ENCODE measurements at regions of chr4 and their contacts with region 1.

Region 1: DNA sequence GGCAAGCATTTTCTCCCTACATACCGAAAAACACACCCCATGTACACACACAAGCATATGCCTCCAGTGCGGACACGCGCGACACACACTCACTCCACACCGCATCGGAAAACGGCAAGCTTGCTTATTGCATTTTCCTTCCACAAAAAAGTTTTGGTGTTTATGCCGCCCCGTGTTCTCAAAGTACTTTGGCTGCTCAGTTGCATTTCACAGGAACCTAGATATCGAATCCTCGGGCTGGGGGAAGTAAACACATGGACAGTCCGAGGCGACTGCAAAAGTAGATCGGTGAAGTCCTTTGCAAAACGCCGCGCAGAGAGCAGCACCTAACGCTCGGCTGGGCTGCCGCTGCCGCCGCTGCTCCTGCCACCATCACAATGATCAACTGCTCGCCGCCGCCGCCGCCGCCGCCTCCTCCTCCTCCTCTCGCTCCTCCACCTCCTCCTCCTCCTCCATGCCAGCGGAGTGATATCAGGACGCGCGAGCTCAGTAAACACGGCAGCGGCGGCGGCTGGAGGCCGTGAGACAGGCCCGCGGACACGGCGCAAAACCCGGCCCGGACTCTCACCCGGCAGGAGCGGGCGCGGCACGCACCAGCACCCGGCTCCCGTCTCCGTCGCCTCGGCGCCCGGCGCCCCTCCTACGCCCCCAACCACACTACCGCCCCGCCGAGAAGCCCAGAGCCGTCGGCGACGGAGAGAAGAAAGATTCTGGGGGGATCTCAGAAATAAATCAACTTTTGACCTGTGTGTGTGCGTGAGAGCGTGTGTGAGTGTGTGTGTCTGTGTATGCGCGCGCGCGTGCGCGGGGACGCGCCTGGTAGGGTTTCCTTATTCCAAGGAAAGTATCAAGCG is at the start of gene MAML3:
- DNase-seq: peak; percentile 91 to 93
- ATAC-seq: peak; percentile 69 to 74
- H3K4me3 ChIP-seq: peak within 1 kb of the TSS; percentile 68 to 92 (median 88)
- H3K27ac ChIP-seq: peak within 1 kb of the TSS; percentile 93 to 97 (median 94)
- H3K4me1 ChIP-seq: peaks cover 0 to 11% of the 10 kb centered on the region in 2 donors
- H3K27me3 ChIP-seq: no peaks in the 10 kb centered on the region
- CTCF ChIP-seq: peak in 4 of 5 experiments; percentile 4 to 40 (median 21)
- POLR2A ChIP-seq: peak; percentile 55 to 84
- total RNA-seq, gene MAML3: 0.98 to 1.5 (median 1.4) TPM

Region 2: DNA sequence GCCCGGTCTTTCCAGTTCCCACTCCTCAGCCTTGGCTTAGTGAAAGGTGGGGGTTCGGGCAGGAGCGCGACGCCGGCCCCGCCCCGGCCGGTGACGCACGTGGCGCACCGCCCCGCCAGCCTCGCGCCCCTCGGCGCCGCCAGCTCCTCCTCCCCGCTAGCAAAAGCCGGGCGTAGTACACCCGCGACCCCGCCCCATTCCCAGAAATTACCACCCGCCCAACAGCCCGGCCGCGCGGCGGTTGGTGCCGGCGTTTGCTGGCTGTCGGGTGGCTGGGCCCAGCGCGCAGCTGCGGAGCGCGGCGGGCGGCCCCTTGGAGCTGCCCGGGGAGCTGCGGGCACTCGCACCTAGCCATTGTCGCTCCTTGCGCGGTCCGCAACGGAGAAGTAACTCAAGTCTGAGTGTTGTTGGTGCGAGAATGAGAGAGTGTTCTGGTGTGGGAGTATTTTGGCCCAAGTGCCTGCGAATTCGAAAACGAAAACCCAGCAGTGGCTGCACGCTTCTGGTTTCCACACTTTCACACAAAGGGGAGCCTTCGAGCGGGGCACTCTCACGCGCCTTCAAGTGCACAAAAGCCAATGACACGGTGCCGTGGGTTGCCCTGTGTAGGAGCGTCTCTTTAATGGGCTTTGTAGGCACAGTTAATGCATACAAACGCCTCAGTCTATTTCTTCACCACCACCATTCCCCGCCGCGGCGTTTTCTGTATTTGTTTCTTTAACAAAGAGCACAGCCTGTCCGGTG is 975.9 kb before region 1 on chr4:
- in situ Hi-C with region 1: no loop called
- intact Hi-C with region 1: loop called (anchors 5 kb)
- DNase-seq: peak; percentile 93 to 95
- ATAC-seq: peak; percentile 70 to 71
- H3K4me3 ChIP-seq: peak overlapping the region; percentile 81 to 96 (median 88)
- H3K27ac ChIP-seq: peak overlapping the region; percentile 98 to 100 (median 100)
- H3K4me1 ChIP-seq: peaks cover 13 to 28% of the 10 kb centered on the region in 2 donors
- H3K27me3 ChIP-seq: no peaks in the 10 kb centered on the region
- CTCF ChIP-seq: no peak
- POLR2A ChIP-seq: peak; percentile 89 to 93

Region 3: DNA sequence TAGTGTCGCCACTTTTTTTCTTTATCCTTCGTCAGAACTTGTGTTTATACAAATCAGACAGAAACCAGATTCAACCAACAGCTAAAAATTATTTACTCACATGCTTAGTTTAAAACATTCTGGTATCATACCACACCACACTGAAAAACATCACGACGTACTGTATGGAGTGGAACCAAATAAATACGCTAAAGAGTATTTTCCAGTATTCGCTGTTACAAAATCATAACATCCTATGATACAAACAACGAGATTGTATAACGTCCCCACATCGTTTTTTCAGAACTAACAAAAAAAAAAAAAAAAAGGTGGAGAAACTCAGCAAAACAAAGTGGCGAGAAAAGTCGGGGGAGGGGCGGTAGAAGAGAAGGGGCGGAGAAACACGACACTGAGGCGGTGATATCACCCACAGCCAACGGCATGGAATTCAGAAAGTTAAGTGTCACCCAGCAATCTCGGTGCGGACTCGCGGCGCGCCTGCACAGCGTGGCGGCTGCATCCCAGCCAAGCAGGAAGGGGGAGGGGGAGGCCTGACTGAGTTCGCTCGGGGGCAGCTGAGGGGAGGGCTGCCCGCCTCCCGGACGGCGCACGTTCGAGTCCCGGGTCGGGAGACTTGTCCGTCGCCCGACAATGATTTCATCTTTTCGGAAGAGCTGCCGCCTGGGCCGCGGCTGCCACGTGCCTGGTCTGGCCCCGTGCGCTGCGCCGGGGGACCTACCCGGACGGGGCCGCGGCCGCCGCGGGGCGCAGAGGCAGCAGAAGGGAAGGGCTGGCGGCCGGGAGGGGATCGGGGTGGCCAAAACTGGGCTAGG is 598.8 kb before region 1 on chr4:
- in situ Hi-C with region 1: no loop called
- intact Hi-C with region 1: loop called (anchors 5 kb)
- DNase-seq: peak; percentile 90 to 92
- ATAC-seq: peak; percentile 67 to 71
- H3K4me3 ChIP-seq: peak overlapping the region; percentile 65 to 98 (median 87)
- H3K27ac ChIP-seq: peak overlapping the region; percentile 96 to 99 (median 98)
- H3K4me1 ChIP-seq: peaks cover 45 to 51% of the 10 kb centered on the region in 2 donors
- H3K27me3 ChIP-seq: no peaks in the 10 kb centered on the region
- CTCF ChIP-seq: peak in 1 of 5 experiments; percentile 7
- POLR2A ChIP-seq: peak; percentile 56 to 78

Region 4: DNA sequence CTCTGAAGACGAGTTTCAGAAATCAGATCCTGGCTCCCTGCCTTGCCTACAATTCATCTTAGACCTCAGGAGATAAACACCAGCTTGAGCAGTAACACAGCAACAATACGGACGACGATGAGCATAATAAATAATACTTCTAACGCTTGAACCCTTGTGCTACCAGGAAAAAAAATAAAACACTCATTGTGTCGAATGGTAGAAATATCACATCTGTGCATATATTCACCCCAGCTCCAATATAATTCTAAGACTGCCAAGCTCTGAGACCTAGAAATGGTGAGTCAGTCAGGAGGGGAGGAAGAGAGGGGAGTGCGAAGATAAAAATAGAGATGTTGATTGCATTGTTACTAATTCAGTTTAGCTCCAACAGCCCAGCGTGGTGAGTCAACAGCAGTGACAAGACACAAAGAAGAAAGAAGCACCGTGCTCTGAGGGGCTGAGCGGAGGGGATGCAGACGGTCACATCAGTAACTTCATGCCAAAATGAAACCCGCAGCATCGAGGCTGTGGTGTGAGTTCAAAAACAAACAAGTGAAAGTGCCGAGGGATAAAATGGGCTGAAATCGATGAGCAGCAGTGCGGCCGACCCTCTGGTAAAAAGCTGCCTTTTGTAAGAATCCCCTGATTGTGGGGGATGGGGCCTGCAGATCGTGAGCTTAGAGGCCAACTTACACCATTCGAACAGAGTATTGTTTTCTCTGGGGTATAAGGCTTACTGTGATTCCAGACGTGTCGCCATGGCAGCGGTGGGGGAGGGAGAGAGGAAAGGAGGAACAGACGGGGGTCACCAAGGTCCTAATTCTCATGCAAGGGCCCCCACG is 338.0 kb before region 1 on chr4:
- in situ Hi-C with region 1: no loop called
- intact Hi-C with region 1: loop called (anchors 2 kb)
- DNase-seq: peak; percentile 65 to 71
- ATAC-seq: peak; percentile 91 to 94
- H3K4me3 ChIP-seq: peak overlapping the region; percentile 47 to 69 (median 56)
- H3K27ac ChIP-seq: peak overlapping the region; percentile 73 to 83 (median 80)
- H3K4me1 ChIP-seq: peaks cover 22 to 44% of the 10 kb centered on the region in 2 donors
- H3K27me3 ChIP-seq: no peaks in the 10 kb centered on the region
- CTCF ChIP-seq: no peak
- POLR2A ChIP-seq: peak; percentile 49 to 55

Region 5: GRCh38 chr4:140004549-140004895 is 149.4 kb before region 1 on chr4:
- in situ Hi-C with region 1: no loop called
- intact Hi-C with region 1: loop called (anchors 5 kb)
- DNase-seq: peak; percentile 46 to 66
- ATAC-seq: peak; percentile 81 to 90
- H3K4me3 ChIP-seq: peak overlapping the region; percentile 41 to 52 (median 51)
- H3K27ac ChIP-seq: peak overlapping the region in 3 of 4 donors; percentile 15 to 77 (median 60)
- H3K4me1 ChIP-seq: peaks cover 18 to 23% of the 10 kb centered on the region in 2 donors
- H3K27me3 ChIP-seq: no peaks in the 10 kb centered on the region
- CTCF ChIP-seq: no peak
- POLR2A ChIP-seq: no peak

Region 6: GRCh38 chr4:140109737-140110136 is 44.2 kb before region 1 on chr4:
- in situ Hi-C with region 1: no loop called
- intact Hi-C with region 1: no loop called
- DNase-seq: no peak
- ATAC-seq: no peak
- H3K4me3 ChIP-seq: no peak overlapping the region
- H3K27ac ChIP-seq: no peak overlapping the region
- H3K4me1 ChIP-seq: no peaks in the 10 kb centered on the region
- H3K27me3 ChIP-seq: no peaks in the 10 kb centered on the region
- CTCF ChIP-seq: no peak
- POLR2A ChIP-seq: no peak

Region 7: DNA sequence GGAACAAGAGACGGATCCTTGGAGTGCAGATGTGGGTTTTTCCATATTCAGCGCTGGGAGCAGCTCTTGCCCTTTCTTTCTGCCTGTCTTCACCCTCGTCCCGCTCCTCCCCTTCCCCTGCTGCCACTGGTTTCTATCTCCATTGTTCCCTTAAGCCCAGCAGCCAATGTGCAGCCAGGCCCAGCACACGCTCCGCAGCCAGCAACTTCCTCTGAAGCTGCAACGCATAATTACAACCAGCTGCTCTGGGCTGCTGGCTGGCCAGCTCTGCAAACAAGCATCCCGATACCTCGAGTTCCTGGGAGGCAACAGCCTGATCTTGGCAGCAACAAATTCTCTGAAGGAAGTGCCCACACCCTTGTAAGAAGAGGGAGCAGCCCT is 83.7 kb after region 1 on chr4:
- in situ Hi-C with region 1: loop called in 3 of 4 experiments (anchors 5 to 10 kb)
- intact Hi-C with region 1: loop called (anchors 2 kb)
- DNase-seq: peak; percentile 53 to 70
- ATAC-seq: peak; percentile 42 to 49
- H3K4me3 ChIP-seq: peak overlapping the region; percentile 25 to 45 (median 39)
- H3K27ac ChIP-seq: peak overlapping the region; percentile 84 to 90 (median 88)
- H3K4me1 ChIP-seq: peaks cover 38 to 48% of the 10 kb centered on the region in 2 donors
- H3K27me3 ChIP-seq: no peaks in the 10 kb centered on the region
- CTCF ChIP-seq: no peak
- POLR2A ChIP-seq: no peak

Region 8: GRCh38 chr4:140308366-140309123 is 154.6 kb after region 1 on chr4:
- in situ Hi-C with region 1: no loop called
- intact Hi-C with region 1: loop called (anchors 5 kb)
- DNase-seq: peak; percentile 80 to 89
- ATAC-seq: peak; percentile 97 to 98
- H3K4me3 ChIP-seq: peak overlapping the region in 3 of 4 donors; percentile 15 to 38 (median 29)
- H3K27ac ChIP-seq: peak overlapping the region; percentile 82 to 88 (median 87)
- H3K4me1 ChIP-seq: peaks cover 22 to 25% of the 10 kb centered on the region in 2 donors
- H3K27me3 ChIP-seq: no peaks in the 10 kb centered on the region
- CTCF ChIP-seq: no peak
- POLR2A ChIP-seq: no peak